HepG2 (cell line): ENCODE measurements at regions of chr17 and their contacts with region 1.

Region 1: GRCh38 chr17:49414622-49415350 is at the start of gene PHB1:
- DNase-seq: peak; percentile 99
- ATAC-seq: peak; percentile 99
- H3K4me3 ChIP-seq: peak within 1 kb of the TSS; percentile 87 to 94 (median 92)
- H3K27ac ChIP-seq: peak within 1 kb of the TSS; percentile 63
- H3K4me1 ChIP-seq: peaks cover 55% of the 10 kb centered on the region
- H3K27me3 ChIP-seq: no peaks in the 10 kb centered on the region; a peak in 1 of 5 replicates
- CTCF ChIP-seq: no peak
- EP300 ChIP-seq: peak in 1 of 2 experiments; percentile 49; a peak in 1 of 4 replicates
- POLR2A ChIP-seq: peak; percentile 69 to 95
- RAD21 ChIP-seq: no peak
- total RNA-seq, gene PHB1: 515 and 623 TPM in 2 replicates

Region 2: DNA sequence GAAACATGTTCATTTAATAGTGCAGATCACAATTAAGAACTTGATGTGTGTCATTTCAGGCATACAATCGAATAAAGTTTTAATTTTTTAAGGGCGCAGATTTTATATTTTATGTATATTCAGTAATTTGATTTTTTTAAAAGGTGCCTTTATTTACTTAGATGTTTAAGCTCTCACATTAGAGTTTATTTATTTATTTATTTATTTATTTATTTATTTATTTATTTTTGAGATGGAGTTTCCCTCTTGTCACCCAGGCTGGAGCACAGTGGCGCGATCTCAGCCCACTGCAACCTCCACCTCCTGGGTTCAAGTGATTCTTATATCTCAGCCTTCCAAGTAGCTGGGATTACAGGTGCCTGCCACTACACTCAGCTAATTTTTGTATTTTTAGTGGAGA is 278.5 kb before region 1 on chr17:
- CTCF ChIA-PET with region 1: no interaction called
- POLR2A ChIA-PET with region 1: no interaction called
- in situ Hi-C with region 1: no loop called
- intact Hi-C with region 1: no loop called
- DNase-seq: no peak
- ATAC-seq: no peak
- H3K4me3 ChIP-seq: no peak overlapping the region
- H3K27ac ChIP-seq: no peak overlapping the region
- H3K4me1 ChIP-seq: peaks cover 17% of the 10 kb centered on the region
- H3K27me3 ChIP-seq: peaks cover 11 to 40% of the 10 kb centered on the region in 2 experiments
- CTCF ChIP-seq: no peak
- EP300 ChIP-seq: no peak
- POLR2A ChIP-seq: no peak
- RAD21 ChIP-seq: no peak

Region 3: GRCh38 chr17:49360541-49361128 is 54.2 kb before region 1 on chr17:
- CTCF ChIA-PET with region 1: no interaction called
- POLR2A ChIA-PET with region 1: interaction called, 11 read pairs
- in situ Hi-C with region 1: no loop called
- intact Hi-C with region 1: no loop called
- DNase-seq: no peak
- ATAC-seq: peak; percentile 55
- H3K4me3 ChIP-seq: peak overlapping the region; percentile 96 to 99 (median 99)
- H3K27ac ChIP-seq: peak overlapping the region; percentile 91
- H3K4me1 ChIP-seq: peaks cover 43% of the 10 kb centered on the region
- H3K27me3 ChIP-seq: no peaks in the 10 kb centered on the region; a peak in 1 of 5 replicates
- CTCF ChIP-seq: no peak
- EP300 ChIP-seq: no peak
- POLR2A ChIP-seq: peak in 1 of 2 experiments; percentile 16; a peak in 1 of 4 replicates
- RAD21 ChIP-seq: no peak

Region 4: GRCh38 chr17:49515196-49515770 is 100.5 kb after region 1 on chr17:
- CTCF ChIA-PET with region 1: no interaction called
- POLR2A ChIA-PET with region 1: interaction called, 12 read pairs
- in situ Hi-C with region 1: no loop called
- intact Hi-C with region 1: no loop called
- DNase-seq: peak; percentile 79
- ATAC-seq: peak; percentile 95
- H3K4me3 ChIP-seq: peak overlapping the region; percentile 46 to 72 (median 52)
- H3K27ac ChIP-seq: no peak overlapping the region
- H3K4me1 ChIP-seq: peaks cover 32% of the 10 kb centered on the region
- H3K27me3 ChIP-seq: peaks cover 2 to 28% of the 10 kb centered on the region in 2 experiments; a peak in 4 of 5 replicates
- CTCF ChIP-seq: peak; percentile 34; the same call in 1 of the 2 replicates
- EP300 ChIP-seq: no peak
- POLR2A ChIP-seq: peak in 1 of 2 experiments; percentile 72; a peak in 3 of 4 replicates
- RAD21 ChIP-seq: peak; percentile 43; the same call in 1 of the 2 replicates